Activated CD4-positive, alpha-beta T cell treated with anti-CD3 and anti-CD28 coated beads, Interleukin-2, amount 10 ng/mL, durations not matched to agents 7 days and 5 days (primary cell): ENCODE measurements at regions of chr2 and their contacts with region 1.

Region 1: GRCh38 chr2:38568724-38569436 is 33.8 kb downstream of the HNRNPLL start:
- DNase-seq: no peak
- H3K4me3 Mint-ChIP-seq: no peak overlapping the region
- H3K27ac Mint-ChIP-seq: no peak overlapping the region
- H3K4me1 Mint-ChIP-seq: peaks cover 9% of the 10 kb centered on the region
- H3K27me3 Mint-ChIP-seq: no peaks in the 10 kb centered on the region

Region 2: GRCh38 chr2:38554973-38555595 is 13.8 kb before region 1 on chr2:
- CTCF ChIA-PET with region 1: interaction called, 12 read pairs
- POLR2A ChIA-PET with region 1: interaction called, 3 read pairs
- DNase-seq: no peak
- H3K4me3 Mint-ChIP-seq: no peak overlapping the region
- H3K27ac Mint-ChIP-seq: no peak overlapping the region
- H3K4me1 Mint-ChIP-seq: peaks cover 3% of the 10 kb centered on the region
- H3K27me3 Mint-ChIP-seq: no peaks in the 10 kb centered on the region

Region 3: DNA sequence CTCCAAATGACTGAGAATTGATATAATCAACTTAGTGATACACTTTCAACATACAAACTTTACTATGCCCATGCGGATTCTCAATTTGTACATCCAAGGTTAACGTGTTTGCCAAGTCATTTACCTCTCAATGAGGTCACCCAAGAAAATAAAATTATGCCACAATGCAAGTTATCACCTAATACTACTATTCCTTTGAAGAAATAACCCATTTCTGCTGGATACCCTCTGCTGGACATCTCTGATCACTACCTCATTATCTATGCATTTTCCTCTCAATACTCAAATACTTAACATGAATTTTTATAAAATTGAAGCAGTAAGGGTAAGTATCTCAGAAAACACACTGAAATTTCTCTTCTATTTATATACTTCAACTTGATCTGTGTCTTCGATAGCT is 21.2 kb after region 1 on chr2:
- CTCF ChIA-PET with region 1: no interaction called
- POLR2A ChIA-PET with region 1: no interaction called
- DNase-seq: no peak
- H3K4me3 Mint-ChIP-seq: no peak overlapping the region
- H3K27ac Mint-ChIP-seq: no peak overlapping the region
- H3K4me1 Mint-ChIP-seq: peaks cover 46% of the 10 kb centered on the region
- H3K27me3 Mint-ChIP-seq: no peaks in the 10 kb centered on the region